ENCODE measurements at regions of chr9 and their contacts with region 1.

Region 1: DNA sequence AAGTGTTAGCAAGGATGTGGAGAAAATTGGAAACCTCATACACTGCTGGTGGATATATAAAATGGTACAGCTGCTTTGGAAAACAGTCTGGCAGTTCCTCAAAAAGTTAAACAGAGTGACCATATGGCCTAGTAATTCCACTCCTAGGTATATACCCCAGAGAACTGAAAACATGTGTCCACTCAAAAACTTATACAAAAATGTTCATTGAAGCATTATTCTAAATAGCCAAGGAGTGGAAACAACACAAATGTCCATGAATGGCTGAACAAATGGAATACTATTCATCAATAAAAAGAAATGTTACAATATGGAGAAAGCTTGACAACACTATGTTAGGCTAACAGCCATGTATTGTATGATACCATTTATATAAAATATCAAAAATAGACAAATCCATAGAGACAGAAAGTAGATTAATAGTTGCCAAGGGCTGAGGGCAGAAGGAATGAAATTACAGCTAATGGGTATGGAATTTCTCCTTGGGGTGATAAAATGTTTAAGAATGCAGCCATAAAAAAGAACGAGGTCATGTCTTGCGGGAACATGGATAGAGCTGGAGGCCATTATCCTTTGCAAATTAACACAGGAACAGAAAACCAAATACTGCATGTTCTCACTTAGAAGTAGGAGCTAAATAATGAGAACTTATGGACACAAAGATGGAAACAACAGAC is 33.6 kb upstream of the FBP1 start:
- DNase-seq: no peak
- ATAC-seq: no peak
- H3K4me3 ChIP-seq: no peak overlapping the region
- H3K4me3 Mint-ChIP-seq: no peak overlapping the region
- H3K27ac ChIP-seq: no peak overlapping the region
- H3K27ac Mint-ChIP-seq: no peak overlapping the region
- H3K4me1 ChIP-seq: peaks cover 0 to 6% of the 10 kb centered on the region in 2 donors
- H3K4me1 Mint-ChIP-seq: peaks cover 3% of the 10 kb centered on the region
- H3K27me3 ChIP-seq: peaks cover 0 to 5% (median 0%) of the 10 kb centered on the region in 4 experiments
- H3K27me3 Mint-ChIP-seq: peaks cover 7% of the 10 kb centered on the region
- CTCF ChIP-seq: no peak

Region 2: DNA sequence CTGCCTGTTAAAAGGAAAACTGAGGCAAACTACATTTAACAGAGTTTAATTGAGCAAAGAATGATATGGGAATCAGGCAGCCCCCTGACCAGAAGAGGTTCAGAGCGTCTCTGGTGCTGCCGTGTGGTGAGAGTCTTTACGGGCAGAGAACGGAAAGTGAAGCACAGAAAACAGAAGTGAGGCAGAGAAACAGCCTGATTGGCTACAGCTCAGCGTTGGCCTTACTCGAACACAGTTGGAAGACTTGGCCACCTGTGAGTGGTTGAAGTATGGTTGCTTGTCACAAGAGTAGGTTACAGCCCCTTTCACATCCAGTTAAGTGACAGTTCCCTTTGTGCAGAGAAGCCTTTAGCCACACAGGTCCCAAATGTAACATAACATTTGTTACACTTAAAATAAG is 16.7 kb before region 1 on chr9:
- CTCF ChIA-PET with region 1: interaction called, 33 read pairs
- POLR2A ChIA-PET with region 1: interaction called, 4 read pairs
- intact Hi-C with region 1: no loop called
- DNase-seq: peak; percentile 86
- ATAC-seq: peak; percentile 100
- H3K4me3 ChIP-seq: peak overlapping the region in 4 of 5 experiments; percentile 36 to 66 (median 56)
- H3K4me3 Mint-ChIP-seq: peak overlapping the region; percentile 77
- H3K27ac ChIP-seq: peak overlapping the region; percentile 70 to 83
- H3K27ac Mint-ChIP-seq: peak overlapping the region; percentile 69
- H3K4me1 ChIP-seq: peaks cover 14 to 16% of the 10 kb centered on the region in 2 donors
- H3K4me1 Mint-ChIP-seq: peaks cover 17% of the 10 kb centered on the region
- H3K27me3 ChIP-seq: no peaks in the 10 kb centered on the region
- H3K27me3 Mint-ChIP-seq: peaks cover 5% of the 10 kb centered on the region
- CTCF ChIP-seq: no peak

Region 3: DNA sequence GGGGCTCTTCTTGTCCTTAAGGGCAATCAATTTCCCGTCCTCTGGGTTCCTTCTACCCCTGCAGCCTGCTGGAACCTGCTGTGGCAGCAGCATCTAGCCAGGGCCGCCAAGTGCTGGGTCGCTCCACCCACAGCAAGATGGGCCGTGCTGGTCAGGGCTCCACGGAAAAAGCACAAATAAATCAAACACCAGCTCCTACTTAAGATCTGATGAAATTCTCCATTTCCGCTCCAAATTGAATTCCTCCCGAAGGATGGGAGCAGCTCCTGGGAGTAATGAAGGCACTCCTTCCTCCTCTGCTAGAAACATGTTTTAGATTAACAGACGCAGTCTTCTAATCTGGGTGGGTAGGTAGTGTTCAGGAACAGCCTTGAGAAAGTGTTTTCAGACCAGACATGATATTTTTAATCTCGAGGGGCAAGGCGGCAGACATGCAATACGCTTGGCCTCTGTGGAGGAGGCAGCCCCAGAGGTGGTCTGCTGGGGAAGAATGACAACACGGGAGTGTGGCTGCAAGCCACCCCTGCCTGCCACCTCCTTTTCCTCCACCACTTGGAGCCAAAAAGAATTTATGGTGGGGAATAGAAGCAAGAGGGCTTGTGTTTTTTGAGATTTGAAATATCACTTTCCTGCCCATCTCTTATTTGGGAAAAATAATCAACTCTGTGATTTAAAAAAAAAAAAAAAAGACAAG is 247.6 kb after region 1 on chr9:
- CTCF ChIA-PET with region 1: interaction called, 13 read pairs
- POLR2A ChIA-PET with region 1: no interaction called
- intact Hi-C with region 1: no loop called
- DNase-seq: no peak
- ATAC-seq: no peak
- H3K4me3 ChIP-seq: no peak overlapping the region
- H3K4me3 Mint-ChIP-seq: no peak overlapping the region
- H3K27ac ChIP-seq: no peak overlapping the region
- H3K27ac Mint-ChIP-seq: no peak overlapping the region
- H3K4me1 ChIP-seq: no peaks in the 10 kb centered on the region
- H3K4me1 Mint-ChIP-seq: peaks cover 8% of the 10 kb centered on the region
- H3K27me3 ChIP-seq: no peaks in the 10 kb centered on the region
- H3K27me3 Mint-ChIP-seq: no peaks in the 10 kb centered on the region
- CTCF ChIP-seq: no peak

Region 4: GRCh38 chr9:95127249-95128176 is 454.6 kb after region 1 on chr9:
- CTCF ChIA-PET with region 1: interaction called, 314 read pairs
- POLR2A ChIA-PET with region 1: no interaction called
- intact Hi-C with region 1: loop called (anchors 5 kb)
- DNase-seq: peak; percentile 66
- ATAC-seq: peak; percentile 89
- H3K4me3 ChIP-seq: no peak overlapping the region
- H3K4me3 Mint-ChIP-seq: no peak overlapping the region
- H3K27ac ChIP-seq: no peak overlapping the region
- H3K27ac Mint-ChIP-seq: no peak overlapping the region
- H3K4me1 ChIP-seq: peaks cover 0 to 5% of the 10 kb centered on the region in 2 donors
- H3K4me1 Mint-ChIP-seq: peaks cover 2% of the 10 kb centered on the region
- H3K27me3 ChIP-seq: no peaks in the 10 kb centered on the region
- H3K27me3 Mint-ChIP-seq: no peaks in the 10 kb centered on the region
- CTCF ChIP-seq: peak; percentile 86

Region 5: DNA sequence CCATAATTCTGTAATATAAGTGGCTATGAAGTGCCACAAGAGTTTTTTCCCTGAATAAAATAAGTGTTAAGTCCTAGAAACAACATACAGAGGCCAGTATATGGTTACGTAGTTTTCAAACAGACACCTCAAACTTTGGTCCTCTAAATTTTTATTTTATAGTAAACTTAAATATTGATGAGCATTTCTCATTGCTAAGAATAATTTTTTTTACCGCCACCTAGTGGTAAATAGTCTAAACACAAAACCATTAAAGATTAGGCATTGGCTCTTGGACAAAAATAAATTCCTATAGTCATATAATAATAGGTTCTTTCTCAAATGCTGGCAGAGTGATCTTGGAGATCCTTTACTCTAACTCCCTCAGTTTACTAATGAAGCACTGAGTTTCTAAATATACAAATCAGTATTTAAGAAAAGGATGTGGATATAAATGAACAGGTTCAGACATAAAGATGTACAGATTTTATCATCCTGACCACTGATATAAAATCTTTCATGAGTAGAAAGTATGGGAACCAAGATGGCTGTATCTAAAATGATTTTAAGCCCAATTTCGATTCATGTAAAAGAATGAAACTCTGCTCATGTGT is 508.4 kb after region 1 on chr9:
- CTCF ChIA-PET with region 1: interaction called, 9 read pairs
- POLR2A ChIA-PET with region 1: no interaction called
- intact Hi-C with region 1: loop called (anchors 1 kb)
- DNase-seq: peak; percentile 23
- ATAC-seq: no peak
- H3K4me3 ChIP-seq: no peak overlapping the region
- H3K4me3 Mint-ChIP-seq: no peak overlapping the region
- H3K27ac ChIP-seq: no peak overlapping the region
- H3K27ac Mint-ChIP-seq: no peak overlapping the region
- H3K4me1 ChIP-seq: no peaks in the 10 kb centered on the region
- H3K4me1 Mint-ChIP-seq: no peaks in the 10 kb centered on the region
- H3K27me3 ChIP-seq: no peaks in the 10 kb centered on the region
- H3K27me3 Mint-ChIP-seq: no peaks in the 10 kb centered on the region
- CTCF ChIP-seq: peak; percentile 85